ENCODE measurements at regions of chr11 and their contacts with region 1.

Region 1: GRCh38 chr11:36041988-36042611 is 98.2 kb downstream of the LDLRAD3 start:
- DNase-seq: no peak
- H3K4me3 ChIP-seq: no peak overlapping the region
- CTCF ChIP-seq: peak; percentile 59

Region 2: GRCh38 chr11:36030731-36031281 is 11.3 kb before region 1 on chr11:
- CTCF ChIA-PET with region 1: interaction called, 18 read pairs
- POLR2A ChIA-PET with region 1: interaction called, 3 read pairs
- DNase-seq: peak; percentile 36
- H3K4me3 ChIP-seq: no peak overlapping the region
- CTCF ChIP-seq: no peak

Region 3: GRCh38 chr11:36073411-36074203 is 31.5 kb after region 1 on chr11:
- CTCF ChIA-PET with region 1: interaction called, 16 read pairs
- POLR2A ChIA-PET with region 1: no interaction called
- DNase-seq: peak; percentile 40
- H3K4me3 ChIP-seq: no peak overlapping the region
- CTCF ChIP-seq: no peak

Region 4: DNA sequence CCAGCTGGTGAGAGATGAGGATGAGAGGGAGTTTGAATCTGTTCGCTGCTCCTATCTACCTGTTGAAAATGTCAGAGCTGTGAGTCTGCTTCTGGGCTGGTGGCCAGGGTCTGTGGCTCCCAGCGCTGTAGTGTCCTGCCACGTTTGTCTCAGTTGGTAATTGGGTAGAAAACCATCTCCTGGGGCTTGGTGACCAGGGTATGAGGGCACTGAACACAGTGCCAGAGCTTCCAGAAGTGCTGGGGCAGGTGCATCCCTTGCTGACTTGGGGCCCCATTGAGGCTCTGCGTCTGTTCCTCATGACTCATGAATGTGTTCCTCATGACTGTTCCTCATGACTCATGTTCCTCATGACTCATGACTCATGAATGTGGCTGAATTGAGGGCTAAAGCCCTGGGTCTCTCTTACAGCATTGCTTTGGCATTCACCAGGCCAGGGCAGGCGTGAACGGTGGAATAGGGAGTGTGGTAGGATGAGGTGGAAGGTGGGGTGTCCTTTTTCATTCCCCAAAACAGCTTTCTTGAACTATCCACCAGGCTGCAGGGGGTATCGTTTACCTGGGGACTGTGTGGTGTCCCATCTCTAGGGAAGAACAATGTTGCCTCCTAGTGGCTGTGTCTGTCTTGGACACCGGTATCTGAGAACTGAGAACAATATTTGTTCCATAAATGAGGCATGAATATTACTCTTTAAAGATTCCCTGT is 107.6 kb after region 1 on chr11:
- CTCF ChIA-PET with region 1: interaction called, 11 read pairs
- POLR2A ChIA-PET with region 1: no interaction called
- DNase-seq: peak; percentile 88
- H3K4me3 ChIP-seq: no peak overlapping the region
- CTCF ChIP-seq: peak; percentile 41

Region 5: GRCh38 chr11:36265793-36266628 is 223.9 kb after region 1 on chr11:
- CTCF ChIA-PET with region 1: interaction called, 77 read pairs
- POLR2A ChIA-PET with region 1: no interaction called
- DNase-seq: no peak
- H3K4me3 ChIP-seq: no peak overlapping the region
- CTCF ChIP-seq: peak; percentile 87